Sigmoid colon (tissue), 7 donors: ENCODE measurements at regions of chr13 and their contacts with region 1.

Region 1: GRCh38 chr13:107421028-107421427 is 794.3 kb downstream of the LIG4 start:
- DNase-seq: no peak
- H3K4me3 ChIP-seq: no peak overlapping the region
- H3K27ac ChIP-seq: no peak overlapping the region
- H3K4me1 ChIP-seq: no peaks in the 10 kb centered on the region
- H3K27me3 ChIP-seq: peaks cover 0 to 5% (median 0%) of the 10 kb centered on the region in 3 donors
- CTCF ChIP-seq: no peak
- EP300 ChIP-seq: no peak
- POLR2A ChIP-seq: no peak

Region 2: DNA sequence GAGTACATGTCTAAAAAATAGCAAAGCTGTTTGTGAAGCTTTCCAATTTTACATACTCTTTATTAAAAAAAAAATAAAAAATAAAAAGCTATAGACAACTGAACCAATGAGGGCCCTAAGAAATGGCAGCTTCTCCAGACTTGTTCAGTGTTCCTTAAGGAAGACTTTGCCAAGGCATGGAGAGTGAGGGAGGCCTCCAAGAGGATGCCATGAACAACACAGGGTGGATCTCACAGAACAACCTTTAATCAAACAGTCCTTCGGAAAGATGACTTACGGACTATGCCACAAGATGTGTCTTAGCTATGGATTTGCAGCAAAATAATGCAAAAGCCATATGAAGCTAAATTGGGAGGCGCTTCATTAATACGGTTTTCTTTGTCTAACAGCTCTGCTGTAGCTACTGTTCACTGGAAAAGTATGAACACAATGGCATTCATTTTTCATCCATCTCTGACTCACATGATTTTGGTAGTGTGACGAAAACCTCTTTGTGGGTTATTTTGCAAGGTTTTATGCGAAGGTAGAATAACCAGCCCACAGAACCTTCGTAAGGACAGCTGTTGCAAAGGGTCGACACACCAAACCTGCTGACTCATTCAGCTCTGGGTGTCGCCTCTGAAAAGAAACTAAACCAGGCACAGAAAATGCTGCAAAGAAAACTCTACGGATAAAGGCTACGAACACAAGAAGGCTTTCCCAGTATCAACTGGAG is 913.3 kb before region 1 on chr13:
- intact Hi-C with region 1: no loop called
- DNase-seq: no peak
- H3K4me3 ChIP-seq: peak overlapping the region in 1 of 4 donors; percentile 28
- H3K27ac ChIP-seq: peak overlapping the region; percentile 47 to 65 (median 56)
- H3K4me1 ChIP-seq: peaks cover 0 to 55% (median 9%) of the 10 kb centered on the region in 4 donors
- H3K27me3 ChIP-seq: no peaks in the 10 kb centered on the region
- CTCF ChIP-seq: no peak
- EP300 ChIP-seq: no peak
- POLR2A ChIP-seq: no peak

Region 3: GRCh38 chr13:106986033-106986484 is 435.0 kb before region 1 on chr13:
- intact Hi-C with region 1: loop called (anchors 5 kb)
- DNase-seq: no peak
- H3K4me3 ChIP-seq: no peak overlapping the region
- H3K27ac ChIP-seq: no peak overlapping the region
- H3K4me1 ChIP-seq: no peaks in the 10 kb centered on the region
- H3K27me3 ChIP-seq: no peaks in the 10 kb centered on the region
- CTCF ChIP-seq: no peak
- EP300 ChIP-seq: no peak
- POLR2A ChIP-seq: no peak

Region 4: GRCh38 chr13:107493266-107493665 is 72.2 kb after region 1 on chr13:
- intact Hi-C with region 1: no loop called
- DNase-seq: no peak
- H3K4me3 ChIP-seq: no peak overlapping the region
- H3K27ac ChIP-seq: no peak overlapping the region
- H3K4me1 ChIP-seq: no peaks in the 10 kb centered on the region
- H3K27me3 ChIP-seq: no peaks in the 10 kb centered on the region
- CTCF ChIP-seq: no peak
- EP300 ChIP-seq: no peak
- POLR2A ChIP-seq: no peak

Region 5: DNA sequence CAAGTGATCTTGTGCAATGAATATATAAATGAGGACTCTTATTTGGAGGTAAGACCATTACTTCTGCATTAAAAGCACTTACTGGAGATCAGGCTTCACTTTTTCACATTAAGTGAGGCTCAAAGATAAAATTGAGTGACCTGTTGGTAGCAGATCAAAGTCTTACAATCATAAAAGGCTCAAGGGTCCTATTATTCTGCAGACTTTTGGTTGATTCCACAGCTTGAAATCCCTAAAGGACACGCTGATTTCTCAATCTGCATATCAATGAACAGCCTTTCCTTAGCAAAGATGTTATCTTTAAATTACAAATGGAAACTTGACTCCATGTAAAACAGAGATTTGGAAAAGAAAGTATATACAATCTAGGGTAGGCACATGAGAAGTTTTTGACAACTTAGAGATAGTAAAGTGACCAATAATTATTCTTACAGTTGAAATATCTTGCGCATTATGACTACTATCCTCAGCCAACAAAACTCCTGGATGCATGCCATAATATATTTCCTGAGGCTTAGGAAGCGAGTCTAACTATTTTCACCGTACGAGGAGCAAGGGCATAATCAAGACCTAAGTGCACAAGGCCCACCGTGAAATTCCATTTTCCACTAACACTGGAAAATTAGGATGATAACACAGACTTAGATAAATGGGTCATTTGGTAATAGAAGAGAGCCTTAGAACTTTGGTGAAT is 153.6 kb after region 1 on chr13:
- intact Hi-C with region 1: no loop called
- DNase-seq: no peak
- H3K4me3 ChIP-seq: no peak overlapping the region
- H3K27ac ChIP-seq: no peak overlapping the region
- H3K4me1 ChIP-seq: no peaks in the 10 kb centered on the region
- H3K27me3 ChIP-seq: no peaks in the 10 kb centered on the region
- CTCF ChIP-seq: no peak
- EP300 ChIP-seq: no peak
- POLR2A ChIP-seq: no peak

Region 6: GRCh38 chr13:107753291-107753690 is 332.3 kb after region 1 on chr13:
- intact Hi-C with region 1: no loop called
- DNase-seq: no peak
- H3K4me3 ChIP-seq: no peak overlapping the region
- H3K27ac ChIP-seq: no peak overlapping the region
- H3K4me1 ChIP-seq: no peaks in the 10 kb centered on the region
- H3K27me3 ChIP-seq: no peaks in the 10 kb centered on the region
- CTCF ChIP-seq: no peak
- EP300 ChIP-seq: no peak
- POLR2A ChIP-seq: no peak